ENCODE measurements at regions of chr9 and their contacts with region 1.

Region 1: DNA sequence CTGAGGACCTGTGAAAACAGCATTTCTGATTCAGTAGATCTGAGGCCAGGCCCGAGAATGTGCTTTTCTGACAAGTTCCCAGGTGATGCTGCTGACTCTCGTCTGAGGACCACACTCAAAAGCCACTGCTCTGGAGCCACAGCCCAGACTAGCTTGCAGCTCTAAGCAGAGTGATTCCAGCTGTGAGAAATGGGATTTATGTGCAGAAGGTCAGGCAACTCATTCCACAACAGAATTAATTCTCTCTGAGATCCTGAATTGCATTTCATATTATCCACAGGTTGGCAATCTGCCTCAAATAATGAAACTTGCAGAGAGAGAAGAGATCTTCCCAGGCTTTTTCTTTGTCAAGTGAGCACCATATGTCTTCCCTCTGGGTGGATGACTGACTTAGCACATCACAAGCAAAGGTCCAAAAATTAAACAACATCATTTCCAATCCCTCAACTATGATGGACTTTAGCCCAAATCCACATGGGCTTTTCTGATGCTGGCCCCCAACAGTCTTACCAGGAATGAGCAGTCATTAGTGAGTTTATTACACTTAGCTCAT is 140.2 kb downstream of the ALDH1A1 start:
- DNase-seq: no peak
- ATAC-seq: no peak
- H3K4me3 Mint-ChIP-seq: no peak overlapping the region
- H3K27ac Mint-ChIP-seq: no peak overlapping the region
- H3K4me1 Mint-ChIP-seq: no peaks in the 10 kb centered on the region
- H3K27me3 Mint-ChIP-seq: peaks cover 3% of the 10 kb centered on the region

Region 2: DNA sequence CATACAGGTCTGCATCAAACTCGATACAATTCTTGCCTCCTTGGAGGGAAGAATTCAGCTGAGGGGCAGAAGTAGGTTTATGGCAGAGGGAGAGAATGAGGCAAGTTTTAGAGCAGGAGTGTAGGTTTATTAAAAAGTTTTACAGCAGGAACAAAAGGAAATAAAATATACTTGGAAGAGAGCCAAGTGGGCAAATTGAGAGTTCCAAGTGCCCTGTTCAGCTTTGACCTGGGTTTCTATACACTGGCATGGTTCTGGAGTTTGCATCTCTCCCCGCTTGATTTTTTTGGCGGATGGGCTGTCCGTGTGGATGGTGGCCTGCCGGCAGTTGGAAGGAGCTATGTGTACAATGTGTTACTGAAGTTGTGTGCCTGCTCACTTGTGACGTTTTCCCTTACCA is 24.2 kb after region 1 on chr9:
- CTCF ChIA-PET with region 1: no interaction called
- POLR2A ChIA-PET with region 1: no interaction called
- intact Hi-C with region 1: loop called in 1 of 2 experiments (anchors 2 kb)
- DNase-seq: no peak
- ATAC-seq: no peak
- H3K4me3 Mint-ChIP-seq: no peak overlapping the region
- H3K27ac Mint-ChIP-seq: no peak overlapping the region
- H3K4me1 Mint-ChIP-seq: no peaks in the 10 kb centered on the region
- H3K27me3 Mint-ChIP-seq: no peaks in the 10 kb centered on the region

Region 3: DNA sequence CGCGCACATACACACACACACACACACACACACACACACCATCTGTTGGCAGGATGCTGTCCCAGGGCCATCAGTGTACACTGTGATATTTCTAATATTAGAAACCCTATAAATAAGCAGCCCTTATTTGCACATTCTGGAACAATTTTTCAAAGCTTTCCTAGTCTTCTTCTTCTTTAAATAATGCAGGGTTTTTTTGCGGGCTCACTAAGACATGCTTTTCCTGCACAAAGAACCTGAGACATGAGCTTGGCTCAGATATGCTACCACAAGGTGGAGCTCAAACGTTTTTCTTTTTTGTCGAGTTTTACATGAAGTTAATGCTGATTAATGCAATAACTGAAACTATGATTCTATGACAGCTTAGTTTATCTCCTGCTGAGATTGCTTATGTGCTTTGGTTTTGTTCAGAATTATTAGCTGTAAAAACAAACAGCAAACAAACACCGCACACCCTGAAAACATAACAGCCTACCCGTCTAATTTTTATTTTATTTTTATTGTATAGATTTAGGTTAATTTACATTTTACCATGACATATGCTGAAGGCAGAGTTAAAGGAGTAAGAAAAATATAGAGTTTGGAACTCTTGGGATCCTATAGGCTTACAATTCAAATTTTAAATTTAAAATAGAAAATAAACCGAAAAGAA is 44.5 kb after region 1 on chr9:
- CTCF ChIA-PET with region 1: no interaction called
- POLR2A ChIA-PET with region 1: no interaction called
- intact Hi-C with region 1: no loop called
- DNase-seq: peak; percentile 9
- ATAC-seq: no peak
- H3K4me3 Mint-ChIP-seq: no peak overlapping the region
- H3K27ac Mint-ChIP-seq: no peak overlapping the region
- H3K4me1 Mint-ChIP-seq: no peaks in the 10 kb centered on the region
- H3K27me3 Mint-ChIP-seq: no peaks in the 10 kb centered on the region

Measured in activated CD4-positive, alpha-beta T cell treated with anti-CD3 and anti-CD28 coated beads for 36 hours (primary cell).